ENCODE measurements at regions of chr11 and their contacts with region 1.

Region 1: GRCh38 chr11:102177126-102177525 is 66.9 kb downstream of the YAP1 start:
- DNase-seq: no peak
- H3K4me3 ChIP-seq: no peak overlapping the region
- H3K27ac ChIP-seq: peak overlapping the region; percentile 77
- H3K27me3 ChIP-seq: no peaks in the 10 kb centered on the region
- CTCF ChIP-seq: no peak

Region 2: DNA sequence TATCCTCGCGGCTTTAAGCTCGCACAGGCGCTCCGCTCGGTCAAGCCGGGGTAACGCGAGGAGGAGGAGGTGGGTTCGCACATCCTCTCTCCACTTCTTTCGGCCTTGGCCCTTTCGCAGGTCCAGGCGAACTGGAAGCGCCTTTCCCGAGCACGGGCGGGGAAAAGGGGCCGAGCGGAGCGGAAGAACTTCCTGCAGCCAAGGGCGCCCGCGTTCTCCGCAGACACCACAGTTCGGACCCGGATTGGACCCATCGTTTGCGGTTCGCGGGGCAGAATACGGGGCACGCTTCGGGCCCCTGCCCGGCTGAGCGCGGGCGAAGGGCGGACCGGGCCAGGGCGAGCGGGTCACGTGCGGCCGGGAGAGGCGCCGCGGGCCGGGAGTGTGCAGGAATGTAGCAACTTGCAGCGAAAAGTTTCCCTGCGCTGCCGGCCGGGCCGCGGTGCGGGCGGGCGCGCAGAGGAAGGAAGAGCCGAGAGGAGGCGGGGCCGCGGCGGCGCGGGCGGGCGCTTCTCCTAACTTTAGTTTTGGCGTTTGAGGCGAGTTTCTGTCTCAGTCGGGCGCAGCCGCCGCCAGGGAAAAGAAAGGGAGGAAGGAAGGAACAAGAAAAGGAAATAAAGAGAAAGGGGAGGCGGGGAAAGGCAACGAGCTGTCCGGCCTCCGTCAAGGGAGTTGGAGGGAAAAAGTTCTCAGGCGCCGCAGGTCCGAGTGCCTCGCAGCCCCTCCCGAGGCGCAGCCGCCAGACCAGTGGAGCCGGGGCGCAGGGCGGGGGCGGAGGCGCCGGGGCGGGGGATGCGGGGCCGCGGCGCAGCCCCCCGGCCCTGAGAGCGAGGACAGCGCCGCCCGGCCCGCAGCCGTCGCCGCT is 67.0 kb before region 1 on chr11 and contains the start of gene YAP1:
- CTCF ChIA-PET with region 1: no interaction called
- POLR2A ChIA-PET with region 1: interaction called, 12 read pairs
- DNase-seq: no peak
- H3K4me3 ChIP-seq: peak within 1 kb of the TSS; percentile 90
- H3K27ac ChIP-seq: peak within 1 kb of the TSS; percentile 96
- H3K27me3 ChIP-seq: no peaks in the 10 kb centered on the region
- CTCF ChIP-seq: no peak
- polyA plus RNA-seq, gene YAP1: 117 and 144 TPM in 2 replicates

Region 3: GRCh38 chr11:102205805-102206204 is 28.7 kb after region 1 on chr11:
- CTCF ChIA-PET with region 1: no interaction called
- POLR2A ChIA-PET with region 1: no interaction called
- DNase-seq: no peak
- H3K4me3 ChIP-seq: no peak overlapping the region
- H3K27ac ChIP-seq: no peak overlapping the region
- H3K27me3 ChIP-seq: no peaks in the 10 kb centered on the region
- CTCF ChIP-seq: no peak

Region 4: DNA sequence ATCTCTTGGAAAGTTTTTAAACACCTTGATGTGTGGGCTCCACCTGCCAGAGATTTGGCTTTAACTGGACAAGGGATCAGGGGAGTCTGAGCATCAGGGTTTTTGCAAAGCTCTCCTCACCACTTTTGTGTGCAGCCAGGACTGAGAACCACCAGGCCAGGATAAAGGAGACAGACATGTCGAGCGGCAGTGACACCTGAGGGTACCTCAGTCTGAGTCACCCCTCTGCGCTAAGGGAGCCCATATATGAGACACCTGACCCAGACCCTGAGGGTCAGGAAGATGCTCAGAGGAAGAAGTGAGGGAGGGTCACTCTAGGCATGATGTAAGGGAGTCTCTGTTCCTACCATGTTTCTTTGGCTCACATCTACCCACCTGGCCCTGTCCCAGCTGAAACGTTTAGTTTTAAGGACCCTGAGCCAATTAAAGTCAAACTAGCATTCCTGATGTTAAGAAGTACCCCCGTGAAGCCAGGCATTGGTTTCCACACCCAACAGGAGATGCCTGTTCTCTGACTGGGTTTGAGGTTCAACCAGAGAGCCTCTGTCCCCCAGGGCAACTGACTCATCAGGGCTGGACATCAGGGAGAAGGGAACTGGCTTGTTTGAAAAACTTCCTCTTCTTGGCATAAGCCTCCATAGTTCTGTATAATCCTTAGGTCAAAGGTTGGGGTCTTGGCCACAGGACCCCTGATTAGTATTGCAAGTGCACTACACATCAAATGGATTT is 67.7 kb after region 1 on chr11:
- CTCF ChIA-PET with region 1: no interaction called
- POLR2A ChIA-PET with region 1: no interaction called
- DNase-seq: no peak
- H3K4me3 ChIP-seq: no peak overlapping the region
- H3K27ac ChIP-seq: no peak overlapping the region
- H3K27me3 ChIP-seq: no peaks in the 10 kb centered on the region
- CTCF ChIP-seq: no peak

Measured in AG04450 (cell line).